BJ (cell line): ENCODE measurements at regions of chr12 and their contacts with region 1.

Region 1: GRCh38 chr12:93380480-93381121 is 2.9 kb downstream of the NUDT4 start:
- DNase-seq: no peak
- H3K4me3 ChIP-seq: peak overlapping the region; percentile 90
- H3K27me3 ChIP-seq: no peaks in the 10 kb centered on the region
- CTCF ChIP-seq: peak; percentile 21; the same call in 1 of the 2 replicates

Region 2: DNA sequence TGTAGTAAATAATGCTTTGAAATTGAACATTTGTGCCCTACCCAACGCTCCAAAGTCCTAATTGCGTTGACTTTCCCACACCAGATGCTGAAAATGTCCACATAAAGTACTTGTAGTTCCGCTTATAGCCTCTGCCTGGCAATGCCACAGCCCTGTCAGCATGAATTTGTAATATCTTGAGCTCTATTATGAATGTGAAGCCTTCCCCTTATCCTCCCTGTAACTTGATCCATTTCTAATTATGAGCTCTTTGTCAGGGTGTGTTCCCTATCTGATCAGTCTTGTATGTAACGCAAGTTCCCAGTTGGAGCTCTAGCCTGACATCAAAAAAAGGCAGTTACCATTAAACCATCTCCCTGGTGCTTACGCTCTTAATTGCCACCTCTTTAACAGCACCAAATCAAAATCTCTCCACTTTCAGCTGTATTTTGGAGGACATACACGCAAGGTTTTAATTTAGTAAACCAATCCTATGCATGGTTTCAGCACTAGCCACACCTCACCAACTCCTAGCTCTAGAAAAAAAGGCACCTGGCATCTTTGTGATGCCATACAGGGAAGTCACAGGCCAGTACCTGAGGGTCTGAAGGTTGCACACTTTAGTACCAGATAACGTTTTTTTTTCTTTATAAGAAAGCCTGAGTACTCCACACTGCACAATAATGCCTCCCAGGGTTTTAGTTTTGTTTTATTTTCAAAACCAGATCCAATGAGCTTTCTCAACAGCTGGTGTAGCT is 520.8 kb before region 1 on chr12:
- CTCF ChIA-PET with region 1: no interaction called
- POLR2A ChIA-PET with region 1: interaction called, 28 read pairs
- DNase-seq: no peak
- H3K4me3 ChIP-seq: no peak overlapping the region
- H3K27me3 ChIP-seq: no peaks in the 10 kb centered on the region
- CTCF ChIP-seq: no peak

Region 3: GRCh38 chr12:93358058-93358457 is 22.5 kb before region 1 on chr12:
- CTCF ChIA-PET with region 1: no interaction called
- POLR2A ChIA-PET with region 1: no interaction called
- DNase-seq: no peak
- H3K4me3 ChIP-seq: no peak overlapping the region
- H3K27me3 ChIP-seq: no peaks in the 10 kb centered on the region
- CTCF ChIP-seq: no peak

Region 4: GRCh38 chr12:93397412-93397811 is 16.8 kb after region 1 on chr12:
- CTCF ChIA-PET with region 1: interaction called, 14 read pairs
- POLR2A ChIA-PET with region 1: no interaction called
- DNase-seq: no peak
- H3K4me3 ChIP-seq: no peak overlapping the region
- H3K27me3 ChIP-seq: no peaks in the 10 kb centered on the region
- CTCF ChIP-seq: no peak

Region 5: DNA sequence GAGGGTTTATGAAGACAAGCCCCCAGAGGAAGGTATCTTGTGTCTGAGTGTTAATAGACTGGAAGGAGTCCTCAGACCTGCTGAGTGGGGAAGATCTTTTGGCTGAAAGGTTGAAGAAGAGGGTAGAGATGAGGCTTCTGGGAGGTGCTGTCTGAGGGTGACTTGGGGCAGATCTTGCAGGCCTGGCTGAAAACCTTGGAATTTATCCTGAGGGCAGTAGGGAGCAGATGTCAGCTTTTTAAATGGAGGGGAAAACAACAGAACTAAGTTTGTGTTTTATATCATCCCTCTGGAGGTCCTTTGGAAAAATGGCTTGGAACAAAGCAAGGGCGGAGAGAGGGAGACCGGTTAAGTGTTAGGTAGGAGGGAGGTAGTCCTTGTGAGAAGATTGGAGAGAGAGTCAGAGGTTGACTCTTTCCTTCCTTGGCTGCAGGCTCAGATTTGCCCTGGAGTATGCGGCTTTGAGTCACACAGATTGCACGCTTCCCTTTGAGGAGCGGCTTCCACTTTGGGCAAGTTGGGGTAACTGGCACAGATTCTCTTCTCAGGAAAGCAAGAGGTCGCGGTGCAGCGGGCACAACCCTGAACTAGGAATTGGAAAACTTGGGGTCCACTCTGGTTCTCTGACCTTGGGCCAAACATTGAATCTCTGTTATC is 201.6 kb after region 1 on chr12:
- CTCF ChIA-PET with region 1: no interaction called
- POLR2A ChIA-PET with region 1: no interaction called
- DNase-seq: no peak
- H3K4me3 ChIP-seq: no peak overlapping the region
- H3K27me3 ChIP-seq: no peaks in the 10 kb centered on the region
- CTCF ChIP-seq: no peak